Activated naive CD8-positive, alpha-beta T cell treated with anti-CD3 and anti-CD28 coated beads, Interleukin-2, amount 10 ng/mL, durations not matched to agents 7 days and 5 days (primary cell): ENCODE measurements at regions of chr5 and their contacts with region 1.

Region 1: DNA sequence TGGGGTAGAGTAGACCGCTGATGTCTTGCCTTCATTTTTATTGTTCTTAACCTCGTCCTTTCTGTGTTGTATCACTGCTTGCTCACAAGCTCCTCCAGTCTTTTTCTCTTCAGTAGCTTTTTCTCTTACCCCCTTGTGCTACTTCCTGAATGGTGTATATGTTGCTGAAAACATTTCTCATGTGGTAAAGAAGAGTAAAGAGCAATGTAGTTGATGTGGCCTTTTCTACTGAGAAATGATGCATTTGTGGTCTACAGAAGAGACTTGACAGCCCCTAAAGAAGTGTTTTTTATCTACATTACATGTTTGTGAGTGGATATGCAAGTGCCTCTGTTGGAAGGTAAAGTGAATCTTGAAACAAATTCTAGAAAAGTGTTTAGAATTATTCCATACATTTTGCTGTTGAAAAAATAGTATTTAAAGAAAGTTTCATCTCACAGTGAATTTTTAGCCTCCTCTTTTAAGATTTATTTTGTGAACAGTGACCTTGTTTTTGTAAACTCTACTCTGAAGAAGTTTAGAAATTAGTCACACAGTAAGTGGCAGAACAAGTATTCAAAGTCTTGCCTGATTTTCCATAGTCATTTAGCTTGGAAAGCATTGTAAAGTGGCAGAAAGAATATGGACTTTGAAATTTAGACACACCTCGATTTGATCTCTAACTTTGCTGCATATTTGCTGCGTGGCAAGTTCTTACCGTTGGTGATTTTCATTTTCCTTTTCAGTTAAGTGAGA is 17.4 kb downstream of the CDC42SE2 start:
- DNase-seq: no peak
- ATAC-seq: peak; percentile 78
- H3K4me3 Mint-ChIP-seq: peak overlapping the region; percentile 80
- H3K27ac Mint-ChIP-seq: peak overlapping the region; percentile 90
- H3K4me1 Mint-ChIP-seq: peaks cover 73% of the 10 kb centered on the region
- H3K27me3 Mint-ChIP-seq: no peaks in the 10 kb centered on the region

Region 2: DNA sequence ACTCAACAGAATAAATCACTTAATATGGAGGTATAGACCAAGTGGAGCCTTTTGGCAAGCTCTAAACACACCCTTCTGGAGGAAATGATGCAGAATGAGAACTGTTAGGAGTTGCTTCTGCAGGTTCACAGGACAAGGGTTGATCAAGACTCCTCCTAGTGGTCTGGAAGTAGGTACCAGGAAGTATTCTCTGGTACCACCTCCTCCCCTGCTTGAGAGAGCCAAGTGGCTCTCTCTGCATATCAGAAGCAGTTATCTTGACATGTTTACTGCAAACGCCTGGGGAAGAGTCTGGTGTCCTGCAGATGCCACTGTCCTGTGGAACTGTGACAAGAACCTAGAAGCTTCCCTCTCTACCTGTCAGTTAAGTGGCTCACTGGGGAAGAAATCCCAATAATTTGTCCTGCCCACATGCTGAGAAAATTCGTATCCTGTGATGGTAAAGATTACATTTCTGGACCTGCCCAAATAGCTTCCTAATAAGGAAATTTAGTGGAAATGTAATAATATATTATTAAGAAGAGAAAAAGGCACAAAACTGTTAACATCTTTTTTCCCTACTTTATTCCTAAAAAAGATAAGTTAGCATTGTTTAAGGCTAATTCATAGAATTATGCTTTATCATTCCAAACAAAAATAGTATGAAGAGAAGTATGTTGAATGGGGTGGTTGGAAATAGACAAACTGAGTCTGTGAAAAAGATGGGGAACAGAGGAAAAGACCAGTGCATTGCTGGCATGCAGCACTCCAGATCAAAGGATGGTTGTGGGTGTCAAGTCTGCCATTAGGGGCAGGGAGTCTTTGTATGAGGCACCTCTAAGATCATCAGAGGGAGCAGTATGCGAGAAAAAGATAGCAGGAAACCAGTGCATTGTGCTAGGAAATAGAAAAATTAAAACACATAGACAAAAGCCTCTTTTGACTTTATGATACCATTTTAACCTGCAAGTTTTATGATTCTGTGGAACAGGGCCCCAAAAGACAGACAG is 101.4 kb after region 1 on chr5:
- POLR2A ChIA-PET with region 1: interaction called, 10 read pairs
- DNase-seq: no peak
- ATAC-seq: peak; percentile 79
- H3K4me3 Mint-ChIP-seq: peak overlapping the region; percentile 47
- H3K27ac Mint-ChIP-seq: peak overlapping the region; percentile 67
- H3K4me1 Mint-ChIP-seq: peaks cover 63% of the 10 kb centered on the region
- H3K27me3 Mint-ChIP-seq: no peaks in the 10 kb centered on the region